ENCODE measurements at regions of chr11 and their contacts with region 1.

Region 1: DNA sequence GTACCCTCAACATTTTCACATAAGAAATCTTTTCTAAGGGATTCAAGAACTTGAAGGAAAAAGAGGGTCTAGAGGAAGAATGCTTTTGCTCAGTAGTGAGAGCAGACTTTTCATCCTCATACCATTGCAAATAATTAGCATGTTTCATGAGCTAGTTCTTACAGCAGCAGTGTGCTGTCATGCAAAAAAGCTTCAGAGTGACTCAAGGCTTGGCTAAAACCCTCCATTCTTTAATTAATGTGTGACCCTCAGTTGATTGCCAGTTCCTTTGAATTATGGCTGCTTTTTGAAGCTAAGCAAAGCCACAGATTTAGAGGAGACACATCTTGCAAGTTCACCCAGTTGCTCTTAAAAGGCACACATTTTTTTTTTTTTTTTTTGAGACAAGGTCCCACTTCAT is 36.6 kb upstream of the PCF11 start:
- DNase-seq: no peak
- H3K4me3 ChIP-seq: no peak overlapping the region
- H3K27ac ChIP-seq: peak overlapping the region; percentile 38 to 44
- H3K4me1 ChIP-seq: no peaks in the 10 kb centered on the region
- H3K27me3 ChIP-seq: no peaks in the 10 kb centered on the region
- CTCF ChIP-seq: no peak
- POLR2A ChIP-seq: no peak

Region 2: DNA sequence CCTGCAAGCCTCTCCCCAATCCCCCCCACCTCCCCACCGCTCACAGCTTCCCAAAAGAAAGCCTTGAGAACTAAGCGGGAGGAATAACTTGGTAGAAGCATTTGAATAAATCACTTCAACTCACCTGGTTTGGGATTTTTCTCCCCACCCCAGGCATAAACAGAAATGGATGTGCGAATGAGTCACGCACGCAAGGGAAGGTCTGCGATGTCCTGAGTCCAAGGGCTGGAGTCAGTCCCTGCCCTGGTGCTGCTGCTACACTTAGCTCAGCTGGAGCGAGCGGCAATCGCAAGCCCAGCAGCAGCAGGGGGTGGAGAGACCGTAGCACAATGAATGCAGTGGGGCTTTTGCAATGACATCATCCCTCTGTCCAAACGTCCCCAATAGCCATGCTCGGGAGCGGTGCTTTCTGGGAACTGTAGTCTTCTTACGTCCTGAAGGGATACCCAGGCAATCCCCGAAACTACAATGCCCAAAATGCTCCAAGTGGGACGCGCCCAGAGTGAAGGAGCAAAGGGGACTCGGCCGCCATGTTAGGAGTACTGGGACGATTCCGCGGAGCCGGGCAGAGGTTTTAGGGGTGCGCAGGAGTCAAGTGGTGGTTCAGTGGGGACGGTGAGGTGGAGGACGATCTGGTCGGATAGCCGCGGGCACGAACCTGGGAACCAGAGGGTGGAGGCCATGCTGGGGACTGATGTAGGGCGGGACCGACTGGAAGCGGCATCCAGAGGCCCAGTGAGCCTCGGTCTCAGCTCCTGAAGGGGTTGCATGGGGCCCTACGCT is 48.6 kb before region 1 on chr11 and contains the start of gene RAB30:
- intact Hi-C with region 1: loop called (anchors 5 kb)
- DNase-seq: peak; percentile 99
- H3K4me3 ChIP-seq: peak within 1 kb of the TSS; percentile 84 to 90
- H3K27ac ChIP-seq: peak within 1 kb of the TSS; percentile 94 to 95
- H3K4me1 ChIP-seq: peaks cover 3% of the 10 kb centered on the region
- H3K27me3 ChIP-seq: no peaks in the 10 kb centered on the region
- CTCF ChIP-seq: peak in 2 of 4 experiments; percentile 5 to 18
- POLR2A ChIP-seq: peak; percentile 92
- total RNA-seq, gene RAB30: 13.3 to 15.9 TPM

Region 3: GRCh38 chr11:83156150-83156995 is 36.0 kb after region 1 on chr11:
- intact Hi-C with region 1: loop called (anchors 2 kb)
- DNase-seq: peak; percentile 99
- H3K4me3 ChIP-seq: peak overlapping the region; percentile 46 to 98
- H3K27ac ChIP-seq: peak overlapping the region; percentile 100
- H3K4me1 ChIP-seq: no peaks in the 10 kb centered on the region
- H3K27me3 ChIP-seq: no peaks in the 10 kb centered on the region
- CTCF ChIP-seq: peak in 1 of 4 experiments; percentile 19
- POLR2A ChIP-seq: peak; percentile 69